CD14-positive monocyte (primary cell): ENCODE measurements at regions of chr11 and their contacts with region 1.

Region 1: GRCh38 chr11:86456052-86456939 is 81.6 kb downstream of the CCDC81 start:
- DNase-seq: peak; percentile 36 to 55 (median 53)
- H3K4me3 ChIP-seq: no peak overlapping the region
- H3K4me3 Mint-ChIP-seq: no peak overlapping the region
- H3K27ac ChIP-seq: no peak overlapping the region
- H3K27ac Mint-ChIP-seq: peak overlapping the region in 2 of 7 donors; percentile 24 to 58
- H3K4me1 ChIP-seq: no peaks in the 10 kb centered on the region
- H3K4me1 Mint-ChIP-seq: peaks cover 26% of the 10 kb centered on the region
- H3K27me3 ChIP-seq: no peaks in the 10 kb centered on the region
- H3K27me3 Mint-ChIP-seq: peaks cover 0 to 1% (median 0%) of the 10 kb centered on the region in 3 donors
- CTCF ChIP-seq: peak; percentile 93

Region 2: GRCh38 chr11:86818466-86819192 is 362.3 kb after region 1 on chr11:
- intact Hi-C with region 1: loop called (anchors 2 to 5 kb)
- DNase-seq: peak in 2 of 3 donors; percentile 33 to 34
- H3K4me3 ChIP-seq: no peak overlapping the region
- H3K4me3 Mint-ChIP-seq: no peak overlapping the region
- H3K27ac ChIP-seq: no peak overlapping the region
- H3K27ac Mint-ChIP-seq: no peak overlapping the region
- H3K4me1 ChIP-seq: no peaks in the 10 kb centered on the region
- H3K4me1 Mint-ChIP-seq: peaks cover 2% of the 10 kb centered on the region
- H3K27me3 ChIP-seq: peaks cover 2 to 4% of the 10 kb centered on the region in 2 donors
- H3K27me3 Mint-ChIP-seq: peaks cover 1 to 6% (median 5%) of the 10 kb centered on the region in 3 donors
- CTCF ChIP-seq: peak; percentile 80